A673 (cell line): ENCODE measurements at regions of chr5 and their contacts with region 1.

Region 1: GRCh38 chr5:59174248-59174844 is 591.5 kb downstream of the RAB3C start:
- DNase-seq: peak; percentile 80
- H3K4me3 ChIP-seq: no peak overlapping the region
- H3K27ac ChIP-seq: no peak overlapping the region
- H3K4me1 ChIP-seq: no peaks in the 10 kb centered on the region
- H3K27me3 ChIP-seq: no peaks in the 10 kb centered on the region
- CTCF ChIP-seq: peak; percentile 93

Region 2: DNA sequence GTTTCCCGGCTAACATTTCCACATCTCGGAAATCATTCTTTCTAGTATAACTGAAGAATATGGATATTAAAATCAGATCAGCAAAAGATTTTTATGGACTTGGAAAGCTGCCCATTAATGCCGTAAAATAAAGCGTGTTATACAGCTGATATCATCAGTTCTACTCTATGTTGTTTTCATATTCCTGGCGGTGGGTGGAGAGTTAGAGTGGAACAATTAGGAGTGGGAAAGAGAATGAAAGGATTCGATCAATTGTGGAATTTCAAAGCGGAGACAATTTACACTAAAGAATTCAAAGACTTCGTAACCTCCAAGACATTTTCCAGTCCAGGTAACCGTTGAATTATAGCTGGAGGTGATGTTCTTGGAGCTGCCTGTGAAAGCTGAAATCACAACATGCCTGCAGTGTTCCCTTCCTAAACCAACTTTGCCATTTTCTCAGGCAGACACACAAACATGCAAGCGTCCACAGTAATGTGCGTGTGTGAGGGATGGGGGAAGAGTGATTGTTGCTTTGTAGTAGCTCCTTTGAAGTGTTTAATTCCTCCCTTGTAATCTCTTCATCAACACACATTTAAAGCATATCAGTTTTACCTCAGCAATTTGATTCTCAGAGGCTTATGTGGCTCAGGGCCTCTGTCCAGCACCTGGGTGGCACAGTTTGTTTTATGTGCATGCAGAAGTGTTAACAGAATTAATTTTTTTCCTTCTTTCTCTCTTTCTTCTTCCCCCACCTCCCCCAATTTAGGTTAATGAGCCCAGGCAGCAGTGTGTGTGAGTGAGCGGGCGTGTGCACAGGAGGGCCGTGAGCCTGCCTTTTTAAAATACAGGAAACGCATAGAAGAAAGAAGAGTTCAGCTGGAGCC is 47.4 kb before region 1 on chr5:
- CTCF ChIA-PET with region 1: no interaction called
- POLR2A ChIA-PET with region 1: no interaction called
- intact Hi-C with region 1: loop called (anchors 5 kb)
- DNase-seq: peak; percentile 64
- H3K4me3 ChIP-seq: peak overlapping the region; percentile 22
- H3K27ac ChIP-seq: peak overlapping the region; percentile 98
- H3K4me1 ChIP-seq: peaks cover 51% of the 10 kb centered on the region
- H3K27me3 ChIP-seq: no peaks in the 10 kb centered on the region
- CTCF ChIP-seq: no peak